Dorsolateral prefrontal cortex (tissue), 120 donors: ENCODE measurements at regions of chr10 and their contacts with region 1.

Region 1: DNA sequence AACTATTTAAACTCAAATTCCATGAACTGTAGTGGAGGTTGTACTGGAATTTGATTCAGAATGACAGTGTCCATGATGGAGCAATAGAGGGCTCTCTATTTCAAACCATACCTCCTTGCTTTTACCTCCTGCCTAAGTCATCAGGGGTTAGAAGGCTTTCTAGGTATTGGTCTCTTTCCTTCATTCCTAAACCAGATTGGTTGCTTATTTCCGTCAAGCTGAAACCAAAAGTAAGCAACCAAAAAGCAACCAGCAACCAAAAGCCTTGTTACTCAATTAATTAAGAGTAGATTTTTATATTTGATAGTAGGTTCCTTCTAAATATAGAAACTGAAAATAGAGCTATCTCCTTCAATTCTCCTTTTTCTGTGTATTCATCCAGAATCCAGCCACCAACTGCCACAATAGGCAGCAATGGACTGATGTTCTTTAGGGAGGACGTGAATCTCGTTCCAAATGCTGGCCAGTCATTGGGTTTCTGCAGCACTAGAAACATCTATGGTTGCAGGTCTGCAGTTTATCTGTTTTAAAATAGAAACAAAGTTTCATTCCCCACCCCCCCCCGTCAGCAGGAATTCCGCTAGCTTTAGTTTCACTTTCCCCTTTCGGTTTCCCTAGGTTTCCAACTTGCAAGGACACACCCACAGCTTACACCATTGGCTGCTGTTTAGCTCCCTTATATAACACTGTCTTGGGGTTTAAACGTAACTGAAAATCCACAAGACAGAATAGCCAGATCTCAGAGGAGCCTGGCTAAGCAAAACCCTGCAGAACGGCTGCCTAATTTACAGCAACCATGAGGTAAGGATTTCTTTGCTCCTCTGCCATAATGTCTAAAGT is at the start of gene IFIT1:
- DNase-seq: peak in 6 of 10 donors; percentile 40 to 65 (median 55)
- H3K4me3 ChIP-seq: peak within 1 kb of the TSS; percentile 41 to 84 (median 68)
- H3K27ac ChIP-seq: peak within 1 kb of the TSS; percentile 11 to 98 (median 93)
- H3K27me3 ChIP-seq: no peaks in the 10 kb centered on the region
- CTCF ChIP-seq: peak in 9 of 56 donors; percentile 2 to 41 (median 15)
- total RNA-seq, gene IFIT1: 23.2 to 313 (median 49.2) TPM

Region 2: DNA sequence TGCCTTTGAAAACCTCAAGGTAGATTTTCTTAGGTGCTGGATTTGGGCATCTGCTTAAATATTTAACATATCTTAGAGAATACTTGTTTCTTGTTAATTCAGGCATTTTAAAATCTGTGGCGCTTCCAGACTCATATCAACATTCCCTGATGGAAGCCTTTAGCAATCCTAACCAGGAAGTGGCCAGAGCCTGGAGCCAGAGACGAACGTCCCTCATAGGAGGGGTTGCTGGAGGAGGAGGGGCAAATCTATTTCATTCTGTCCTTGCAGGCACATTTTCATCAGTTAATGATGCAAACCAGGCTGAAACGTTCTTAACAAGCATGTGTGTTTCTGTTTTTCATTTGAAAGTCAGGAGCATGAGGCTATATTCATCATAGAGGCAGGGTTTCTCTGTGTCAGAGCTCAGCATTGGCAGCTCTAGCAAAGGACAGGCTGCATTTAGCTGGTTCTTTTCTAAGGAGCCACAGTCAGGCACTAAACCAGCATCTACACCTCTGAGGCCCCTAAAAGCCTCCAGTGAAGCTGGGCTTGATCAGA is 108.1 kb before region 1 on chr10:
- intact Hi-C with region 1: loop called in 1 of 2 experiments (anchors 5 kb)
- DNase-seq: peak in 2 of 10 donors; percentile 34 to 70
- H3K4me3 ChIP-seq: peak overlapping the region; percentile 1 to 61 (median 38)
- H3K27ac ChIP-seq: peak overlapping the region; percentile 56 to 96 (median 88)
- H3K27me3 ChIP-seq: no peaks in the 10 kb centered on the region
- CTCF ChIP-seq: peak in 4 of 56 donors; percentile 9 to 19 (median 14)

Region 3: GRCh38 chr10:89535171-89536012 is 143.3 kb after region 1 on chr10 and contains the start of gene SLC16A12:
- intact Hi-C with region 1: no loop called
- DNase-seq: no peak
- H3K4me3 ChIP-seq: peak within 1 kb of the TSS in 58 of 59 donors; percentile 4 to 65 (median 44)
- H3K27ac ChIP-seq: peak within 1 kb of the TSS in 5 of 59 donors; percentile 38 to 71 (median 63)
- H3K27me3 ChIP-seq: peaks cover 4 to 71% (median 50%) of the 10 kb centered on the region in 45 donors
- CTCF ChIP-seq: no peak
- total RNA-seq, gene SLC16A12: 0.11 to 14.1 (median 0.46) TPM in 115 of 120 experiments, not detected in the others